ENCODE measurements at regions of chr10 and their contacts with region 1.

Region 1: DNA sequence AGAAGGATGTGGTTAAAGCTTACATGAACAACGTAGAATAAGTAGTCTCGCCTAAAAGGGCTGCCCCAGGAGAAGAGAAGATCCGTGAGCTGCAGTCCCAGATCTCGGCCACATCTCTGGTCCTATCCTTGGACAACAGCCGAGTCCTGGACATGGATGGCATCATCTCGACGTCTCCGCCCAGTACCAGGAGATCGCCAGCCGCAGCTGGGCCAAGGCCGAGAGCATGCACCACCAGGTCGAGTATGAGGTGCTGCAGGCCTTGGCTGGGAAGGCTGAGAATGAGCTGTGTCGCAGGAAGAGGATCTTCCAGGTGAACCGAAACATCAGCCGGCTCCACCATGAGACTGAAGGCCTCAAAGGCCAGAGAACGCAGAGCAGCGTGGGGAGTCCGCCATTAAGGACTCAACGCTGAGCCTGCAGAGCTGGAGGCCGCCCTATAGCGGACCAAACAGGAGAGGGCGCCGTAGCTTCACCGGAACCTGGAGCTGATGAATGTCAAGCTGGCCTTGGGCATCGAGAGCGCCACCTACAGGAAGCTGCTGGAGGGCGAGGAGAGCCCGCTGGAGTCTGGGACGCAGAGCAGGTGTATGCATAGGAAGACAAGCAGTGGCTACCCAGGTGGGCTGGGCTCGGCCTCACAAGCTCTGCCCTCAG is 22.2 kb downstream of the LIPK start:
- DNase-seq: peak; percentile 99
- ATAC-seq: peak; percentile 97
- H3K4me3 Mint-ChIP-seq: no peak overlapping the region
- H3K27ac Mint-ChIP-seq: no peak overlapping the region
- H3K4me1 Mint-ChIP-seq: peaks cover 13% of the 10 kb centered on the region
- H3K27me3 Mint-ChIP-seq: peaks cover 49% of the 10 kb centered on the region
- CTCF ChIP-seq: peak; percentile 95

Region 2: GRCh38 chr10:88582806-88583583 is 145.2 kb before region 1 on chr10 and contains the start of gene RNLS:
- CTCF ChIA-PET with region 1: interaction called, 31 read pairs
- POLR2A ChIA-PET with region 1: interaction called, 3 read pairs
- DNase-seq: peak; percentile 74
- ATAC-seq: peak; percentile 94
- H3K4me3 Mint-ChIP-seq: peak within 1 kb of the TSS; percentile 72
- H3K27ac Mint-ChIP-seq: peak within 1 kb of the TSS; percentile 2
- H3K4me1 Mint-ChIP-seq: peaks cover 12% of the 10 kb centered on the region
- H3K27me3 Mint-ChIP-seq: peaks cover 26% of the 10 kb centered on the region
- CTCF ChIP-seq: peak; percentile 79
- total RNA-seq, gene RNLS: 8.7 to 9.2 TPM (median 8.7 TPM) in 3 replicates

Region 3: GRCh38 chr10:88598055-88598454 is 130.2 kb before region 1 on chr10:
- CTCF ChIA-PET with region 1: no interaction called
- POLR2A ChIA-PET with region 1: no interaction called
- DNase-seq: no peak
- ATAC-seq: no peak
- H3K4me3 Mint-ChIP-seq: no peak overlapping the region
- H3K27ac Mint-ChIP-seq: no peak overlapping the region
- H3K4me1 Mint-ChIP-seq: no peaks in the 10 kb centered on the region
- H3K27me3 Mint-ChIP-seq: peaks cover 14% of the 10 kb centered on the region
- CTCF ChIP-seq: no peak

Region 4: GRCh38 chr10:88707429-88708285 is 20.6 kb before region 1 on chr10:
- CTCF ChIA-PET with region 1: interaction called, 13 read pairs
- POLR2A ChIA-PET with region 1: no interaction called
- DNase-seq: no peak
- ATAC-seq: no peak
- H3K4me3 Mint-ChIP-seq: no peak overlapping the region
- H3K27ac Mint-ChIP-seq: no peak overlapping the region
- H3K4me1 Mint-ChIP-seq: peaks cover 32% of the 10 kb centered on the region
- H3K27me3 Mint-ChIP-seq: peaks cover 91% of the 10 kb centered on the region
- CTCF ChIP-seq: no peak

Region 5: GRCh38 chr10:88769384-88769783 is 41.1 kb after region 1 on chr10:
- CTCF ChIA-PET with region 1: interaction called, 14 read pairs
- POLR2A ChIA-PET with region 1: no interaction called
- DNase-seq: no peak
- ATAC-seq: no peak
- H3K4me3 Mint-ChIP-seq: no peak overlapping the region
- H3K27ac Mint-ChIP-seq: no peak overlapping the region
- H3K4me1 Mint-ChIP-seq: peaks cover 10% of the 10 kb centered on the region; the same call in 1 of the 2 replicates
- H3K27me3 Mint-ChIP-seq: no peaks in the 10 kb centered on the region; the same call in 1 of the 2 replicates
- CTCF ChIP-seq: no peak

Region 6: GRCh38 chr10:88810196-88810961 is 82.1 kb after region 1 on chr10:
- CTCF ChIA-PET with region 1: interaction called, 53 read pairs
- POLR2A ChIA-PET with region 1: no interaction called
- DNase-seq: no peak
- ATAC-seq: peak; percentile 94
- H3K4me3 Mint-ChIP-seq: no peak overlapping the region
- H3K27ac Mint-ChIP-seq: no peak overlapping the region
- H3K4me1 Mint-ChIP-seq: peaks cover 3% of the 10 kb centered on the region
- H3K27me3 Mint-ChIP-seq: peaks cover 11% of the 10 kb centered on the region
- CTCF ChIP-seq: peak; percentile 41; the same call in 1 of the 2 replicates

Region 7: GRCh38 chr10:88835096-88835909 is 107.1 kb after region 1 on chr10:
- CTCF ChIA-PET with region 1: interaction called, 21 read pairs
- POLR2A ChIA-PET with region 1: no interaction called
- DNase-seq: peak; percentile 81
- ATAC-seq: peak; percentile 93
- H3K4me3 Mint-ChIP-seq: no peak overlapping the region
- H3K27ac Mint-ChIP-seq: no peak overlapping the region
- H3K4me1 Mint-ChIP-seq: no peaks in the 10 kb centered on the region
- H3K27me3 Mint-ChIP-seq: no peaks in the 10 kb centered on the region; the same call in 1 of the 2 replicates
- CTCF ChIP-seq: peak; percentile 70

Region 8: DNA sequence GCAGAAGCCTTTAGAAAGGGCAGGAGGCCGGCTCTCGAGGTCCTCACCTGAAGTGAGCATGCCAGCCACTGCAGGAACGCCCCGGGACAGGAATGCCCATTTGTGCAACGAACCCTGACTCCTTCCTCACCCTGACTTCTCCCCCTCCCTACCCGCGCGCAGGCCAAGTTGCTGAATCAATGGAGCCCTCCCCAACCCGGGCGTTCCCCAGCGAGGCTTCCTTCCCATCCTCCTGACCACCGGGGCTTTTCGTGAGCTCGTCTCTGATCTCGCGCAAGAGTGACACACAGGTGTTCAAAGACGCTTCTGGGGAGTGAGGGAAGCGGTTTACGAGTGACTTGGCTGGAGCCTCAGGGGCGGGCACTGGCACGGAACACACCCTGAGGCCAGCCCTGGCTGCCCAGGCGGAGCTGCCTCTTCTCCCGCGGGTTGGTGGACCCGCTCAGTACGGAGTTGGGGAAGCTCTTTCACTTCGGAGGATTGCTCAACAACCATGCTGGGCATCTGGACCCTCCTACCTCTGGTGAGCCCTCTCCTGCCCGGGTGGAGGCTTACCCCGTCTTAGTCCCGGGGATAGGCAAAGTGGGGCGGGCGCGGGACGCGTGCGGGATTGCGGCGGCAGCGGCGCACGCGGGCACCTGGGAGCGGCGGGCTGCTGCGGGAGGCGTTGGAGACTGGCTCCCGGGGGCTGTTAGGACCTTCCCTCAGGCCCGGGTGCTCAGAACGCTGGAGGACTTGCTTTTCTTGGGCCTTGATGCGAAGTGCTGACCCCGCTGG is 262.3 kb after region 1 on chr10 and contains the start of gene FAS:
- CTCF ChIA-PET with region 1: interaction called, 11 read pairs
- POLR2A ChIA-PET with region 1: no interaction called
- DNase-seq: peak; percentile 51
- ATAC-seq: peak; percentile 76
- H3K4me3 Mint-ChIP-seq: peak within 1 kb of the TSS; percentile 88
- H3K27ac Mint-ChIP-seq: no peak within 1 kb of the TSS
- H3K4me1 Mint-ChIP-seq: peaks cover 31% of the 10 kb centered on the region
- H3K27me3 Mint-ChIP-seq: peaks cover 36% of the 10 kb centered on the region
- CTCF ChIP-seq: no peak
- total RNA-seq, gene FAS: 2.1 to 4.1 TPM (median 3.3 TPM) in 3 replicates